ENCODE measurements at regions of chr3 and their contacts with region 1.

Region 1: GRCh38 chr3:18389108-18389733 is 35.9 kb downstream of the SATB1 start:
- DNase-seq: no peak
- H3K4me3 ChIP-seq: no peak overlapping the region
- H3K27ac ChIP-seq: no peak overlapping the region
- H3K4me1 ChIP-seq: no peaks in the 10 kb centered on the region
- H3K27me3 ChIP-seq: no peaks in the 10 kb centered on the region
- CTCF ChIP-seq: peak in 3 of 4 experiments; percentile 20 to 61 (median 22)
- EP300 ChIP-seq: no peak
- POLR2A ChIP-seq: no peak

Region 2: DNA sequence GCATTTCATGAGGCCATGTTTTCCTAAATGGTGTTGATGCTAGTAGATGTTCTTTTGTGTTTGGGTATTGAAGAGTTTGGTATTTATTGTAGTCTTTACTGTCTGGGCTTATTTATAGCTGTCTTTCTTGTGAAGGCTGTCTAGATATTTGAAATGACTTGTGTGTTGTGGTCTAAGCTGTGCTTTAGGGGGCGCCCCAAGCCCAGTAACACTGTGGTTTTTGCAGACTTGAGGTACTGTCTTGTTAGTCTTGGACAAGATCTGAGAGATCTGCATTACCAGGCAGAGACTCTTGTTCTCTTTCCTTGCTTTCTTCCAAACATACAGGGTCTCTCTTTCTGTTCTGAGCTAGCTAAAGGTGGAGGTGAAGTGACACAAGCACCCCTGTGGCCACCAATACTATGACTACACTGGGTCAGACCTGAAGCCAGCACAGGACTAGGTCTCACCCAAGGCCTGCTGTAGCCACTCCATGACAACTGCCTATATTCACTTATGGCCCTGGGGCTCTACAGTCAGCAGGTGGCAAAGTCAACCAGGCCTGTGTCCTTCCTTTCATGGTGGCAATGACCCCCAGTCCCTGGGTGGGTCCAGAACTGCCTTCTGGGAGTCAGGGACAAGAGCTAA is 494.7 kb before region 1 on chr3:
- intact Hi-C with region 1: loop called (anchors 10 kb)
- DNase-seq: no peak
- H3K4me3 ChIP-seq: no peak overlapping the region
- H3K27ac ChIP-seq: no peak overlapping the region
- H3K4me1 ChIP-seq: no peaks in the 10 kb centered on the region
- H3K27me3 ChIP-seq: no peaks in the 10 kb centered on the region
- CTCF ChIP-seq: no peak
- EP300 ChIP-seq: no peak
- POLR2A ChIP-seq: no peak

Region 3: DNA sequence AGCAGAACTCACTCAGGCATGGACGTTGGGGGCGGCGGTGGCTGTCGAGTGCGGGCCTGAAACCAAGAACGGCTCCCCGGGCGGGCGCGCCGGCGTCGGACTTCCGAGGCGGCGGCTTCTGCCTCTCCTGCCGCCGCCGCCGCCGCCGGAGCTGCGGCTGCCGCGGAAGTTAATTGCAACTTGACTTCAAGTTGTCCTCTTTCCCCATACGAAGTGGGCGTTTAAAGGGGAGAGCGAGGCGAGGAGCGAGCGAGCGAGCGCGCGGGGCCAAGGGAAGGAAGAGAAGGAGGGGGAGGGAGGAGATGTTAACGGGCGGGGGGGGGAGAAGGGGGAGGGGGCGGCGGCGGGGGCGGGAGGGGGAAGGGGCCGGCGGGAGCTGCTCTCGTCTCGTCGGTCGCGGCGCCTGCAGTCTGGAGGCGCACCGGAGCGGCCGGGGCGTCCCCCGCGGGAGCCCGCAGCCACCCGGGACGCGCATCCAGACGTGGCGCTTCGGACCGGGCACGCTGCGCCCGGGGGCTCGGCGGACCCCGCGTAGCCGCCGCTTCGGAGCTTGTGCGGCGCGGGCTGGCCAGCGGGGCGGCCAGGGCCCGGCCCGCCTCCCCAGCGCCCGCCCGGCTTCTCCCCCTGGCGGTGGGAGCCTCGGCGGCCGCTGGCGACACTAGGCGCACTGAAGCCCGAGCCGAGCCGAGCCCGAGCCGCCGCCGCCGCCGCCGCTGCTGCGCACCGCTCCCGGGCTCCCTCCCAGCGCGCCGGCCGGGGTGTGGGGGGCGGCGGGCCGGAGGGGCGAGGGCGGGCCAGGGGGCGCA is 55.6 kb after region 1 on chr3:
- intact Hi-C with region 1: loop called (anchors 2 kb)
- DNase-seq: peak; percentile 82
- H3K4me3 ChIP-seq: peak overlapping the region; percentile 52 to 71 (median 69)
- H3K27ac ChIP-seq: peak overlapping the region; percentile 63 to 89 (median 82)
- H3K4me1 ChIP-seq: peaks cover 0 to 31% (median 27%) of the 10 kb centered on the region in 4 donors
- H3K27me3 ChIP-seq: no peaks in the 10 kb centered on the region
- CTCF ChIP-seq: peak in 1 of 4 experiments; percentile 19
- EP300 ChIP-seq: no peak
- POLR2A ChIP-seq: no peak